Panc1 (cell line): ENCODE measurements at regions of chr19 and their contacts with region 1.

Region 1: GRCh38 chr19:3471954-3472655 is 8.2 kb downstream of the SMIM24 start:
- DNase-seq: no peak
- ATAC-seq: peak; percentile 40; the same call in 1 of the 2 replicates
- H3K4me3 ChIP-seq: no peak overlapping the region
- H3K27ac ChIP-seq: no peak overlapping the region
- H3K4me1 ChIP-seq: no peaks in the 10 kb centered on the region
- H3K27me3 ChIP-seq: no peaks in the 10 kb centered on the region
- CTCF ChIP-seq: peak; percentile 90

Region 2: GRCh38 chr19:3125900-3126524 is 346.1 kb before region 1 on chr19:
- CTCF ChIA-PET with region 1: no interaction called
- POLR2A ChIA-PET with region 1: no interaction called
- in situ Hi-C with region 1: no loop called
- intact Hi-C with region 1: no loop called
- DNase-seq: peak; percentile 24
- ATAC-seq: peak; percentile 88
- H3K4me3 ChIP-seq: no peak overlapping the region
- H3K27ac ChIP-seq: no peak overlapping the region
- H3K4me1 ChIP-seq: no peaks in the 10 kb centered on the region
- H3K27me3 ChIP-seq: no peaks in the 10 kb centered on the region
- CTCF ChIP-seq: peak; percentile 89

Region 3: GRCh38 chr19:3324321-3324856 is 147.7 kb before region 1 on chr19:
- CTCF ChIA-PET with region 1: interaction called, 5 read pairs
- POLR2A ChIA-PET with region 1: no interaction called
- in situ Hi-C with region 1: no loop called
- intact Hi-C with region 1: loop called (anchors 2 kb)
- DNase-seq: peak; percentile 39
- ATAC-seq: peak; percentile 73
- H3K4me3 ChIP-seq: no peak overlapping the region
- H3K27ac ChIP-seq: no peak overlapping the region
- H3K4me1 ChIP-seq: no peaks in the 10 kb centered on the region
- H3K27me3 ChIP-seq: peaks cover 3% of the 10 kb centered on the region; the same call in 1 of the 2 replicates
- CTCF ChIP-seq: peak; percentile 89

Region 4: GRCh38 chr19:3491396-3492119 is 19.5 kb after region 1 on chr19:
- CTCF ChIA-PET with region 1: no interaction called
- POLR2A ChIA-PET with region 1: no interaction called
- in situ Hi-C with region 1: no loop called
- intact Hi-C with region 1: no loop called
- DNase-seq: no peak
- ATAC-seq: no peak
- H3K4me3 ChIP-seq: no peak overlapping the region
- H3K27ac ChIP-seq: no peak overlapping the region
- H3K4me1 ChIP-seq: no peaks in the 10 kb centered on the region
- H3K27me3 ChIP-seq: no peaks in the 10 kb centered on the region
- CTCF ChIP-seq: no peak